ENCODE measurements at regions of chr16 and their contacts with region 1.

Region 1: DNA sequence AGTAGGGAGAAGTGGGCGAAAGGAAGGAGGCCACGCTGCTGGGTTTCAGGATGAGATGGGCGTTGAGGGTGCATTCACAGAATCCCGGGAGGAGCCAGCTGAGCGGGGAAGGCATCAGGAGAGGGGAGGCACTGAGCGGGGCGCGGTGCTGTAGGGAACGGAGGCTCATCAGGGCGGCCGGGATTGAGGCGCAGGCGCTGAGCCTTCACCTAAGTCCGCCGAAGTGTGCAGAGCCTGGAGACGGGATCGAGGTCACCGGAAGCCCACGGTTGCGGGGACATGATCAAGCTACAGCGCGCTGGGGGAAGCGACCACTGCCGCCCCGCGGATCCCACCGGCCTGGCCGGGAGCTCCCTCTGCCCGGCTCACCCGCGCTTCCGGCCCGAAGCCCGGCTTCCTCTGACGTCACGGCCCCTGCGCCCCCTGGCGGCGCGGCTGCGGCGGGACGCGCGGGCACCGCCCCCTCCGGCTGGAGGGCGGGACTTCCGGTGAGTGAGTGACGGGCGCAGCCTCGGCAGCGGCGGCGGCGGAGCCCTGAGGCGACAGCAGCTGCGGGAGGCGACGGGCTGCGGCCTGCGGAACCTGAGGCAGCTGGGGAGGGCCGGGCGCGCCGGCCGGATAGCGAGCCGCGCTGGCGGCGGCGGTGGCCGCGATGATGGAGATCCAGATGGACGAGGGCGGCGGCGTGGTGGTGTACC is at the start of gene MAPK8IP3:
- DNase-seq: peak; percentile 88
- ATAC-seq: peak; percentile 83
- H3K4me3 Mint-ChIP-seq: peak within 1 kb of the TSS; percentile 96
- H3K27ac Mint-ChIP-seq: peak within 1 kb of the TSS; percentile 98
- H3K4me1 Mint-ChIP-seq: peaks cover 35% of the 10 kb centered on the region
- H3K27me3 Mint-ChIP-seq: no peaks in the 10 kb centered on the region
- CTCF ChIP-seq: peak; percentile 89
- total RNA-seq, gene MAPK8IP3: 58.4 to 65.1 TPM

Region 2: DNA sequence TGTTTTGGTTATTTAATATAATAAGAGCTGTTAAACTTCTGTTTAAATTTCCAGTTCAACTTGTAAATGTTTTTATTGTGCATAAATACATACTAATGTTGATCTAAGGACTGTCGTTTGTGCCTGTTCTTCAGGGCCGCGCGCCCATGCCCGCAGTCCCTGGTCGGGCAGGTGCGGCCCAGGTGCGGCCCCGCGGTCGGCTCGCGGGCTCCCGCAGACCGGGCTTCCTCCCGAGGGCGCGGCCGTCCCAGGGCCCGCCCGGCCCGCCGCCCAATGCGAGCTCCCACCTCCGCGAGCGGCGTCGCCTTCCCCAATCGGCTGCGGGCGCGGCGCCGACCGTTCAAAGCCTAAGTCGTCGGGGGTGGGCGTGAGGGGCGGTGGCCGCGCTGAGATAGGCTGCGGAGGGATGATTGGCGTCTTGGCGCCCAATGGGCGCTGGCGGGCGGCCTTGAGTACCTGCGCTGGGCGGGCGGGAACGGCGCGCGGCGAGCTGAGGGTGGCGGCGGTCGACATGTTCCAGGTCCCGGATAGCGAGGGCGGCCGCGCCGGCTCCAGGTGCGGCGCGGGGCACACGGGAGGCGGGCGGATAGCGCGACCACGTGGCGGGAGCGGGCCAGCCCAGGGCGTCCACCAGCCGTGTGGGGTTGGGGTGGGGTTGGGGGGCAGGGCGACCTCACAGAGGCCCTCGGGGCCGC is 27.9 kb before region 1 on chr16 and contains the start of gene JPT2:
- CTCF ChIA-PET with region 1: interaction called, 20 read pairs
- POLR2A ChIA-PET with region 1: interaction called, 14 read pairs
- intact Hi-C with region 1: no loop called
- DNase-seq: peak; percentile 98
- ATAC-seq: peak; percentile 99
- H3K4me3 Mint-ChIP-seq: peak within 1 kb of the TSS; percentile 82
- H3K27ac Mint-ChIP-seq: peak within 1 kb of the TSS; percentile 84
- H3K4me1 Mint-ChIP-seq: peaks cover 32% of the 10 kb centered on the region
- H3K27me3 Mint-ChIP-seq: no peaks in the 10 kb centered on the region
- CTCF ChIP-seq: no peak
- total RNA-seq, gene JPT2: 61.5 to 62.2 TPM

Region 3: DNA sequence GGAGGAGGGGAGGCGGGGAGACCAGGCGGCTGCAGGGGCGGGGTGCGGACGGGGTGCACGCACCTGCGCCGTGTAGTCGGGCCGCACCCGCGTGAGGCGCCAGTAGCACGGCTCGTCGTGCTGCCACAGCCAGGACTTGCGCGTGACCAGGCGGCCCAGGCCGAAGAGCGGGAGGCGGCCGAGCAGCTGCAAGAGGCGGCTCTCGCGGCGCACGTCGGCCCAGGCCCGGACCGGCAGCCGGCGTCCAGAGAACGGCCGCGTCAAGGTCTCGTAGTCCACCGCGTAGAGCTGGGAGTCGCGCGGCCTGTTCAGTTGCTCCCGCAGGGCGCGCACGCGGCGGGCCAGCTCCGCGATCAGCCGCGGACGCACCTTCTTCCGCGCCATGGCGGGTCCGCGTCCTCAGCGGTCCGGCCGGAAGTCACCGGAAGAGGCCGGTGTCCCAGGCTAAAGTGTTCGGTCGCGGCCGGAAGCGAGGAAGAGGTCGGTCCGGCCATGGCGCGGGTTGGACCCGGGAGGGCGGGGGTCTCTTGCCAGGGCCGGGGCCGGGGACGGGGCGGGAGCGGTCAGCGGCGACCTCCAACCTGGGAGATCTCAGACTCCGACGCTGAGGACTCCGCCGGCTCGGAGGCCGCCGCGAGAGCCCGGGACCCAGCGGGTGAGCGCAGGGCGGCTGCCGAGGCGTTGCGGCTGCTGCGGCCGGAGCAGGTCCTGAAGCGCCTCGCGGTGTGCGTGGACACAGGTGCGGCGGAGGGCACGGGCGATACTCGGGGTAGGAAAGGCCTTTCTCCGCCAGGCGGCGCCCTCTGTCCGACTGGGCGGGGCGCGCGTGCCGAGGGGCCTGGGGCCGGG is 67.1 kb after region 1 on chr16 and contains the starts of genes EME2 and MRPS34:
- CTCF ChIA-PET with region 1: interaction called, 6 read pairs
- POLR2A ChIA-PET with region 1: interaction called, 12 read pairs
- intact Hi-C with region 1: no loop called
- DNase-seq: peak; percentile 84
- ATAC-seq: peak; percentile 63
- H3K4me3 Mint-ChIP-seq: peak within 1 kb of the TSS; percentile 100
- H3K27ac Mint-ChIP-seq: peak within 1 kb of the TSS; percentile 99
- H3K4me1 Mint-ChIP-seq: peaks cover 14% of the 10 kb centered on the region
- H3K27me3 Mint-ChIP-seq: no peaks in the 10 kb centered on the region
- CTCF ChIP-seq: peak; percentile 97
- total RNA-seq, gene EME2: 15.5 to 15.6 TPM
- total RNA-seq, gene MRPS34: 175 to 193 TPM